ENCODE measurements at regions of chr1 and their contacts with region 1.

Region 1: GRCh38 chr1:212558693-212559480 is 49.7 kb upstream of the ATF3 start:
- DNase-seq: peak; percentile 84 to 92 (median 90)
- H3K4me3 ChIP-seq: peak overlapping the region; percentile 55 to 97 (median 79)
- H3K27ac ChIP-seq: peak overlapping the region; percentile 63 to 98 (median 93)
- H3K27me3 ChIP-seq: no peaks in the 10 kb centered on the region
- CTCF ChIP-seq: peak in 2 of 56 donors; percentile 18 to 36

Region 2: GRCh38 chr1:212469701-212470458 is 89.0 kb before region 1 on chr1:
- intact Hi-C with region 1: loop called (anchors 5 kb)
- DNase-seq: peak; percentile 22 to 96 (median 92)
- H3K4me3 ChIP-seq: peak overlapping the region in 27 of 59 donors; percentile 2 to 36 (median 14)
- H3K27ac ChIP-seq: peak overlapping the region; percentile 3 to 99 (median 90)
- H3K27me3 ChIP-seq: no peaks in the 10 kb centered on the region
- CTCF ChIP-seq: peak in 7 of 56 donors; percentile 7 to 44 (median 22)

Region 3: GRCh38 chr1:212477014-212477679 is 81.7 kb before region 1 on chr1:
- intact Hi-C with region 1: loop called (anchors 5 kb)
- DNase-seq: peak; percentile 66 to 91 (median 86)
- H3K4me3 ChIP-seq: peak overlapping the region in 16 of 59 donors; percentile 2 to 42 (median 26)
- H3K27ac ChIP-seq: peak overlapping the region in 42 of 59 donors; percentile 1 to 83 (median 62)
- H3K27me3 ChIP-seq: no peaks in the 10 kb centered on the region
- CTCF ChIP-seq: peak; percentile 81 to 97 (median 90)

Measured in dorsolateral prefrontal cortex (tissue), 120 donors.